ENCODE measurements at regions of chr19 and their contacts with region 1.

Region 1: DNA sequence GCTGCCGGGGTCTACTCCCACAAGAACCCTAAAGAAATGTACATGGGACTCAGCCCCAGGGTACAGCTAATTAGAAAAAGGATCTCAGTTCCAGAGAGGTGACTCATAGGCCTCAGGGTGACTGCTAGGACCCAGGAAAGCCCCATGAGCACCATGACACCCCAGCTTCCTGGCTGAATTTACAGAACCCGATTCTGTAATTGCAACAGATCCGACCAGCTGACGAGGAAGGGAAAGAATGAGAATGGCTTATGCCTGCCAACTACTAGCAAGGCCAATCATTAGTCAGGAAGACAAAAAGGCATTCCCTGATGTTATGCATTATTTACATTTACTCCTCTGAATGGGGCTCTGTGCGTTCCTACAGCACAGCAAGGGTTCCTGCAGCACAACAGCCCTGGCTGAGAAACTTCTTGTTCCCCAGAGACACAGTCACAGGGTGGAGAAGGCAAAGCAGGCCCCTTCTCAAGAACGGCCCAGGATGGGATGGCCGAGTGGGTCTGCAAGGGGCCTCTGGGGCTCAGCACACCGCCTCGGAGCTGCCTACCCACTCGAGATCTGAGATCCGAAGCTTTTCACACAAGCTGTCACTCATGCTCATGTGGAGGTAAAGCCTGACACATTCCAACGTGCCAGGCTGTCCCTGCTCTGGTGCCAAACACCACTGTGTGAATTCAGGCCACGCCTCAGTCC is 27.2 kb downstream of the PBX4 start:
- DNase-seq: peak; percentile 80
- H3K4me3 Mint-ChIP-seq: peak overlapping the region; percentile 43
- H3K27ac Mint-ChIP-seq: peak overlapping the region; percentile 93
- H3K4me1 Mint-ChIP-seq: peaks cover 80% of the 10 kb centered on the region
- H3K27me3 Mint-ChIP-seq: no peaks in the 10 kb centered on the region

Region 2: DNA sequence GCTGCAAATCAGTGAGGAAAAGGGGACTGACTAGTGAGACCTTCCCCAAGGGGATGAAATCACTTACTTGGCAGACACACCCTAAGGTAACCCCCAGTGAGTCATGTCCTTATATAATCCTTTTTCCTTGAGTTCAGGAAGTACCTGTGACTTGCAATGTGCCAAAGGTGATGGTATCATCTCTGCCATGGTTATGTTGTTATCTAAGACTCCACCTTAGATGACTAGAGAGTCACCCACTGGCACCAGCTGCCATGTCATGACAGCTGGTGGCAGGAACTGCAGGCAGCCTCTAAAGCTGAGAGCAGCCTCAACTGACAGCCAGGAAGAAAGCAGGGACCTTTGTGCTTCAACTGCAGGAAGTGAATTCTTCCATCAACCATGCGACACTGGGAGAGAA is 14.7 kb after region 1 on chr19:
- CTCF ChIA-PET with region 1: interaction called, 14 read pairs
- POLR2A ChIA-PET with region 1: interaction called, 76 read pairs
- DNase-seq: peak; percentile 65
- H3K4me3 Mint-ChIP-seq: peak overlapping the region; percentile 41
- H3K27ac Mint-ChIP-seq: peak overlapping the region; percentile 98
- H3K4me1 Mint-ChIP-seq: peaks cover 76% of the 10 kb centered on the region
- H3K27me3 Mint-ChIP-seq: no peaks in the 10 kb centered on the region

Region 3: DNA sequence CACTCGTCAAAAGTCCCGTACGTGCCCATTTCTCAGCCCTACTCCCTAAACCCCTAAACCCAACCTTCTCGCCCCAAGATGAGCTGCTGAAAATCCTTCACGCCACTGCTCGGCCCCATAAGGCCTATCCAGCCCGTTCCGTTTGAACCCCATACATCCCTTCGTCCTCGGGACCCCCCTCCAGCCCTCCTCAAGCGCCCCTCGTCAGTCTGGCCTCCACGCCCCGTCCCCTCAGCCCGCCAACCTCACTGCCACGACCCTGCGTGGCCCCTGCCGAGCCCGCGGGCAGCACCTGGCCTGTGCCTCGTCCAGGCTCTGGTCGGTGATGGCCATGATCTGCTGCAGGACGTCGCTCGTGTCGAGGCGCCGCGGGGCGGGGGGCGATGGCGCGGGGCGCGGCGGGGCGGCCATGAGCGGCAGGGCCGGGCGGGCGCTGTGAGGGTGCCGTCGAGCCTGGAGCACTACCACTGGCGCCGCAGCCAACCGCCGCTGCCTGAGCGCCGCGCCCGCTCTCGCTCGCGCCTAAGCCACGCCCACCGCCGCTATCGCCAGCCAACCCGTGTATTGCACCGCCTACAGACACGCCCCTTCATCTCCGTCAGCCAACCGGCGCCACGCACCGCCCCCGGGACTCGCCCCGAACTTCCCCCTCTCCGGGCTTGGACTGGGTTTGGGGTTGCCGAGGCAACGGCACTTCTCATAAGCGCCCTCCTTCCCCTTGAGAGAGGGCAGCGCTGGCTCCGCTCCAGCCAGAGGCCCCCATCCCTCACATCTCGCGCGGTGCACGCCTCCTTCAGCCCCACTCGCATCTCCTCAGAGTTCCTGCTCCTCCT is 27.2 kb after region 1 on chr19 and contains the start of gene PBX4:
- CTCF ChIA-PET with region 1: interaction called, 4 read pairs
- POLR2A ChIA-PET with region 1: interaction called, 32 read pairs
- DNase-seq: peak; percentile 99
- H3K4me3 Mint-ChIP-seq: peak within 1 kb of the TSS; percentile 99
- H3K27ac Mint-ChIP-seq: peak within 1 kb of the TSS; percentile 86
- H3K4me1 Mint-ChIP-seq: peaks cover 49% of the 10 kb centered on the region
- H3K27me3 Mint-ChIP-seq: no peaks in the 10 kb centered on the region
- total RNA-seq, gene PBX4: 49.0 to 55.6 TPM

Region 4: GRCh38 chr19:19627621-19628500 is 36.6 kb after region 1 on chr19 and contains the start of gene LPAR2:
- CTCF ChIA-PET with region 1: no interaction called
- POLR2A ChIA-PET with region 1: interaction called, 34 read pairs
- DNase-seq: peak; percentile 74
- H3K4me3 Mint-ChIP-seq: peak within 1 kb of the TSS; percentile 83
- H3K27ac Mint-ChIP-seq: peak within 1 kb of the TSS; percentile 91
- H3K4me1 Mint-ChIP-seq: peaks cover 32% of the 10 kb centered on the region
- H3K27me3 Mint-ChIP-seq: no peaks in the 10 kb centered on the region
- total RNA-seq, gene LPAR2: 43.2 to 46.2 TPM

Measured in activated CD4-positive, alpha-beta memory T cell treated with anti-CD3 and anti-CD28 coated beads, Interleukin-2, amount 10 ng/mL, durations not matched to agents 7 days and 5 days (primary cell).